Pancreas (tissue), 10 donors: ENCODE measurements at regions of chr17 and their contacts with region 1.

Region 1: DNA sequence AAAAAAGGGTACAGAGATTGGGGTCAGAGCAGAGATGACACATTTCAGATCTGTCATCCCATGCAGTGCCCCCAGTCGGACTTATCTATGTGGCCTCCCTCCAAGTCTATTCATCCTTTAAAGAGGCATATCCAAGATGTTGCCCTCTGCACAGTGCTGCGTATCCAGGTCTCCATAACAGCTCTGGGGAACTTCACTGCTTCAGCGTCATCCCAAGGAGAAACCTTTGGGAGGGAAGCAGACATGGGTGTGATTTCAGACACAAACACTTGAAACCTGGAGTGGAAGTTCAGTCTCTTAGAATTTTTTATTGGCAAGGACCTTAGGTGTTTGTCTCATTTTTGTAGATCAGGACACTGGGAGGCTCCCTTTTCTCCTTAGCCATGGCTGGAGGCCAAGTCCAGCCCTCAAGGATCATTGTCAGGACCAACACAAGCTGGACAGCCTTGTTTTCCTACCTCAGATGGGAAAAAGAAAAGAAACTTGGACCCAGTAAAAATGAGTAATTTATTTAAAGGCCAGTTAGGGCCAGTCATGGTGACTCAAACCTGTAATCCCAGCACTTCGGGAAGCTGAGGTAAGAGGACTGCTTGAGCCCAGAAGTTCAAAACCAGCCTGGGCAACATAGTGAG is 23.9 kb upstream of the NLK start:
- DNase-seq: no peak
- ATAC-seq: peak in 1 of 4 donors; percentile 20
- H3K4me3 ChIP-seq: no peak overlapping the region
- H3K27ac ChIP-seq: no peak overlapping the region
- H3K4me1 ChIP-seq: no peaks in the 10 kb centered on the region
- H3K27me3 ChIP-seq: no peaks in the 10 kb centered on the region
- CTCF ChIP-seq: no peak

Region 2: DNA sequence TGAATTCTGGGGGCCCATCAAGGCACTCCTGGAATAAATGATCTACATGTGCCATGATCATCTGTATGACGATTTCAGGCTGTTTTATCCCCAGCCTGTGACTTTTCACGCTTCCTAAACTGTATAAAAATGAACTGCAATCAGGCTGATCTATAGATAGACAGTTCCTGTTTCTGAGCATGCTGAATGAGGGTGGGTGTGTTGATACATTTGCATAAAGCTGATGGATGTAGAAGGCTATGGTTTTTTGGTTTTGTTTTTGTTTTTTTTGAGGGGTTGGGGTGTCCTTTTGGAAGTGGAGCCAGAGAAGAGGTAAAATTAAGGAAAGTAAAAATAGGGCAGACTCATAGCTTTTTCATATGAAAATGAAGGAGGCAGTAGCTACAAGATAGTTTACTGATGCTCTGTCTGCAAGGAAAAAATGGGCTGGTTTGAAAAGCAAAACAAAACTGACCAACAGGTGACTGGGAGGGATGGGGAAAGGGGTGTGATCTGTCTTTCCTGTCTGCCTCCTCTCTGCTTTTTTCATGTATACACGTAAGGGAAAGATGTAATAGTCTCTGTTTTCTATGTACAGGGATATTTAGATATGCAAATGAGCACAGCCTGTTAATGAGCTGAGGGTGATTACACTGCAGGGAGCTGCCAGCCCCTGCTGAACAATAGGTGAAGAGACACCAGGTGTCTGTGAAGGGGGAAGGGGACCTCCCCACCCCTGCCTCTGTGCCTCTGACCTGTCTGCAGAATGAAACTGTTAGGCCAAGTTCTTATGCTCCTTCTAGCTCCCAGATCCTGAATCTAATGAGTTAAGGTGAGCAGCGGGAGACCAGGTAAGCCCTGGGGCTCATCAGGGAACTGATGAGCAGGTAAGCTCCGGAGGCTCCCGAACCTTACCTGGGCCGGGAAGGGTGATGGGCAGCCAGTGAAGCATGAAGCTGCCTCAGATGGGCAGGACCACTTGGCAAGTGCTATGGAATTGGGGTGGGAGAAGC is 78.8 kb before region 1 on chr17:
- intact Hi-C with region 1: loop called in 1 of 3 experiments (anchors 10 kb)
- DNase-seq: no peak
- ATAC-seq: no peak
- H3K4me3 ChIP-seq: no peak overlapping the region
- H3K27ac ChIP-seq: no peak overlapping the region
- H3K4me1 ChIP-seq: no peaks in the 10 kb centered on the region
- H3K27me3 ChIP-seq: no peaks in the 10 kb centered on the region
- CTCF ChIP-seq: no peak

Region 3: GRCh38 chr17:28071891-28072606 is 53.5 kb after region 1 on chr17:
- intact Hi-C with region 1: no loop called
- DNase-seq: no peak
- ATAC-seq: no peak
- H3K4me3 ChIP-seq: no peak overlapping the region
- H3K27ac ChIP-seq: no peak overlapping the region
- H3K4me1 ChIP-seq: peaks cover 2 to 18% (median 8%) of the 10 kb centered on the region in 3 donors
- H3K27me3 ChIP-seq: no peaks in the 10 kb centered on the region
- CTCF ChIP-seq: no peak